Calu3 (cell line): ENCODE measurements at regions of chr5 and their contacts with region 1.

Region 1: GRCh38 chr5:137718611-137719010 is 17.3 kb downstream of the KLHL3 start:
- DNase-seq: no peak
- H3K4me3 Mint-ChIP-seq: no peak overlapping the region
- H3K27ac Mint-ChIP-seq: peak overlapping the region; percentile 9
- H3K4me1 Mint-ChIP-seq: peaks cover 33% of the 10 kb centered on the region
- H3K27me3 Mint-ChIP-seq: no peaks in the 10 kb centered on the region
- CTCF ChIP-seq: no peak

Region 2: DNA sequence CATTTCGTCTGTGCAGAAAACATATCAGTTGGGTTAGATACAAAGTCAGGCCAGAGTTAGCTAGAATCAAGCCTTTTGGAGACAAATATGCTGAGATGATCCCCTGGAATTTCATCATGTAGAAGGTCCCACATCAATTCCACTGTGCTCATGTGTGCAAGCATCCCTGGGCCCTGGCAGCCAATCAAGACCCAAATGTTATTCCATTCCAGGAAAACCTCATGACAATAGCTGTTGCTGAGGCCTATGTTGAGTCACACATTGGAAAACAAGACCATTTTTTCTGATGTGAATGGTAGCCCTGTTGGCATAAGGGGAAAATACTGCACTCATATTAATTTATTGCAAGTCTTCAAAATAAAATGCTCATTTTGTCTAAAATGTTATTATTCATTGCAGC is 231.0 kb before region 1 on chr5:
- CTCF ChIA-PET with region 1: no interaction called
- intact Hi-C with region 1: no loop called
- DNase-seq: no peak
- H3K4me3 Mint-ChIP-seq: no peak overlapping the region
- H3K27ac Mint-ChIP-seq: no peak overlapping the region
- H3K4me1 Mint-ChIP-seq: no peaks in the 10 kb centered on the region
- H3K27me3 Mint-ChIP-seq: peaks cover 57% of the 10 kb centered on the region
- CTCF ChIP-seq: no peak

Region 3: DNA sequence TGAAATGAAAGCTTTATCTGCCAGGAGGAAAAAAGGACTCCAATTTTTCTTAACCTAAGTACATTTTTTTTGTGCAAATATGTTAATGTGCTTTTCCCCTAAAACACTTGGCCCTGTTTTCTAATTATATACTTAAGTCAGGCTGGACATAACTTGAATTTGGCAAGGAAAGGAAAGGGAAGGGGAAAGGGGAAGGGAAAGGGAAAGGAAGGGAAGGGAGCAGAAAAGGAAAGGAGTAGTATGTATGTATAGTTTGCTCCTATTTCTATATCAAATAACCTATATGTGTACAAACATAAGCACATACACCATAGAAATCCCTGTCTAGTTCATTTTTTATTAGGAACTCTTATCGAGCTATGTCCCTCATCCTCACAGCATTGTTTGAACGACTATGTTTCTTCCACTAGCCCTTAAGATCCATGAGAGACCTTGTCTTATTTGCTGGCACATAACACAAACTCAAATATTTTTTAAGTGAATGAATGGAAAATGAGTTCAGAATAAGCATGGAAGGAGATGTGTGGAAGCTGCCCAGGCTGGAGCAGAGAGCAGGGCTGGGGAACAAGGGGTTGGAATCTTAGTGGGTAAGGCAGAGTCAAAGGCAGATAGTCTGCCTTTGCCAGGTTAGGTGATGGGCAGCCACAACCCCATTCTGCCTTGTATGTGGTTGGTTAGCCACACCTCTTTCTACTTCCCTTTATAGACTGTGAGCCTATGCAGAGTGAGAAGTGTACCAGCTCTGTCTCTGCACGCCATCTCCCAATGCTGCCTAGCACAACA is 52.7 kb before region 1 on chr5:
- CTCF ChIA-PET with region 1: interaction called, 14 read pairs
- intact Hi-C with region 1: loop called (anchors 2 kb)
- DNase-seq: peak; percentile 63
- H3K4me3 Mint-ChIP-seq: peak overlapping the region; percentile 14
- H3K27ac Mint-ChIP-seq: peak overlapping the region; percentile 28
- H3K4me1 Mint-ChIP-seq: peaks cover 68% of the 10 kb centered on the region
- H3K27me3 Mint-ChIP-seq: no peaks in the 10 kb centered on the region
- CTCF ChIP-seq: no peak

Region 4: GRCh38 chr5:137735555-137736284 is 17.1 kb after region 1 on chr5 and contains the start of gene KLHL3:
- CTCF ChIA-PET with region 1: interaction called, 5 read pairs
- intact Hi-C with region 1: loop called (anchors 1 kb)
- DNase-seq: peak; percentile 73
- H3K4me3 Mint-ChIP-seq: no peak within 1 kb of the TSS
- H3K27ac Mint-ChIP-seq: no peak within 1 kb of the TSS
- H3K4me1 Mint-ChIP-seq: peaks cover 10% of the 10 kb centered on the region
- H3K27me3 Mint-ChIP-seq: no peaks in the 10 kb centered on the region
- CTCF ChIP-seq: no peak
- total RNA-seq, gene KLHL3: 16.9 and 18.2 TPM in 2 replicates